Left lung (tissue), 14 donors: ENCODE measurements at regions of chr1 and their contacts with region 1.

Region 1: GRCh38 chr1:40404670-40405462 is 31.3 kb downstream of the SMAP2 start:
- DNase-seq: peak in 2 of 4 donors; percentile 44 to 64
- ATAC-seq: peak; percentile 89
- H3K4me3 ChIP-seq: no peak overlapping the region
- H3K27ac ChIP-seq: no peak overlapping the region
- H3K4me1 ChIP-seq: peaks cover 0 to 48% of the 10 kb centered on the region in 2 donors
- H3K27me3 ChIP-seq: no peaks in the 10 kb centered on the region
- CTCF ChIP-seq: peak; percentile 79 to 81

Region 2: GRCh38 chr1:40153073-40153770 is 251.6 kb before region 1 on chr1:
- intact Hi-C with region 1: loop called in 1 of 2 experiments (anchors 10 kb)
- DNase-seq: peak in 2 of 4 donors; percentile 49 to 67
- ATAC-seq: peak; percentile 73
- H3K4me3 ChIP-seq: no peak overlapping the region
- H3K27ac ChIP-seq: peak overlapping the region in 1 of 2 donors; percentile 19
- H3K4me1 ChIP-seq: peaks cover 0 to 11% of the 10 kb centered on the region in 2 donors
- H3K27me3 ChIP-seq: peaks cover 0 to under 1% of the 10 kb centered on the region in 2 donors
- CTCF ChIP-seq: peak; percentile 49 to 75